ENCODE measurements at regions of chr12 and their contacts with region 1.

Region 1: GRCh38 chr12:64412459-64412858 is 8.3 kb downstream of the XPOT start:
- DNase-seq: no peak
- H3K4me3 Mint-ChIP-seq: no peak overlapping the region
- H3K27ac Mint-ChIP-seq: no peak overlapping the region
- H3K4me1 Mint-ChIP-seq: peaks cover 19% of the 10 kb centered on the region
- H3K27me3 Mint-ChIP-seq: no peaks in the 10 kb centered on the region

Region 2: GRCh38 chr12:64431791-64432190 is 19.3 kb after region 1 on chr12:
- intact Hi-C with region 1: loop called (anchors 2 kb)
- DNase-seq: no peak
- H3K4me3 Mint-ChIP-seq: no peak overlapping the region
- H3K27ac Mint-ChIP-seq: no peak overlapping the region
- H3K4me1 Mint-ChIP-seq: no peaks in the 10 kb centered on the region
- H3K27me3 Mint-ChIP-seq: no peaks in the 10 kb centered on the region

Measured in activated T-helper 1 cell treated with anti-CD3 and anti-CD28 coated beads, Interleukin-12 subunit alpha, Interleukin-12 subunit beta, Interleukin-2, Interleukin-4 antibody, amounts not matched to agents 30 ng/mL and 10 ng/mL and 1 ng/mL, durations not matched to agents 14 hours and 24 hours and 36 hours (primary cell).